ENCODE measurements at regions of chr12 and their contacts with region 1.

Region 1: DNA sequence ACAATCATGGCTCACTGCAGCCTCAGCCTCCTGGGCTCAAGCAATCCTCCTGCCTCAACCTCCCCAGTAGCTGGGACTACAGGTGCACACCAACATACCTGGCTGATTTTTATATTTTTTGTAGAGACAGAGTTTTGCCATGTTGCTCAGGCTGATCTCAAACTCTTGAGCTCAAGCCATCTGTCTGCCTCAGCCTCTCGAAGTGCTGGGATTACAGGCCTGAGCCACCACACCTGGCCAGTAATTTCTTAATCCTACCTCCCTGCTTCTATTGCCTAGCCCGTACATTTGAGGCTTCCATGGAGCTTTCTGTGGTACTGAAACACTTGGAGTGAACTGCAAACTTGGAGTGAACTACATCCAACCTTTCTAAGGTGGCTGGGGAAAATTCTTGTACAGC is 20.7 kb downstream of the SLC35E3 start:
- DNase-seq: no peak
- H3K4me3 ChIP-seq: no peak overlapping the region
- H3K27ac ChIP-seq: no peak overlapping the region
- H3K4me1 ChIP-seq: no peaks in the 10 kb centered on the region
- H3K27me3 ChIP-seq: no peaks in the 10 kb centered on the region
- CTCF ChIP-seq: no peak
- POLR2A ChIP-seq: no peak

Region 2: DNA sequence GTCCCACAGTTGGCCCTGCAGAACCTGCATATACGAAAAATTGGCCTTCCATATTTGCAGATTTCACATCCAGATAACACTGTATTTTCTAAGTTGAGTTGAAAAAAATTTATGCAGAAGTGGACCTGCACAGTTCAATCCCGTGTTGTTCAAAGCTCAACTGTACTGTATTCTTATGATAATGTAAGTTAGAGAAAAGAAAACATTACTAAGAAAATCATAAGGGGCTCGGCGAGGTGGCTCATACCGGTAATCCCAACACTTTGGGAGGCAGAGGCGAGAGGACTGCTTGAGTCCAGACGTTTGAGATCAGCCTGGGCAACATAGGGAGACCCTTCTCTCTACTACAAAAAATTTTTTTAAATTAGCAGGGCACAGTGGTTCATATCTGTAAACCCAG is 38.9 kb before region 1 on chr12:
- intact Hi-C with region 1: no loop called
- DNase-seq: no peak
- H3K4me3 ChIP-seq: no peak overlapping the region
- H3K27ac ChIP-seq: no peak overlapping the region
- H3K4me1 ChIP-seq: no peaks in the 10 kb centered on the region
- H3K27me3 ChIP-seq: no peaks in the 10 kb centered on the region
- CTCF ChIP-seq: no peak
- POLR2A ChIP-seq: no peak

Region 3: GRCh38 chr12:68739891-68740290 is 26.8 kb before region 1 on chr12:
- intact Hi-C with region 1: loop called (anchors 2 kb)
- DNase-seq: no peak
- H3K4me3 ChIP-seq: no peak overlapping the region
- H3K27ac ChIP-seq: no peak overlapping the region
- H3K4me1 ChIP-seq: no peaks in the 10 kb centered on the region
- H3K27me3 ChIP-seq: no peaks in the 10 kb centered on the region
- CTCF ChIP-seq: no peak
- POLR2A ChIP-seq: no peak